ENCODE measurements at regions of chr1 and their contacts with region 1.

Region 1: GRCh38 chr1:63698001-63698838 is 75.6 kb upstream of the ROR1 start:
- DNase-seq: peak; percentile 75
- ATAC-seq: peak; percentile 89

Region 2: GRCh38 chr1:63198871-63199394 is 499.3 kb before region 1 on chr1:
- intact Hi-C with region 1: no loop called
- DNase-seq: no peak
- ATAC-seq: no peak

Region 3: GRCh38 chr1:63731117-63732043 is 33.2 kb after region 1 on chr1:
- intact Hi-C with region 1: no loop called
- DNase-seq: no peak
- ATAC-seq: peak; percentile 60

Region 4: DNA sequence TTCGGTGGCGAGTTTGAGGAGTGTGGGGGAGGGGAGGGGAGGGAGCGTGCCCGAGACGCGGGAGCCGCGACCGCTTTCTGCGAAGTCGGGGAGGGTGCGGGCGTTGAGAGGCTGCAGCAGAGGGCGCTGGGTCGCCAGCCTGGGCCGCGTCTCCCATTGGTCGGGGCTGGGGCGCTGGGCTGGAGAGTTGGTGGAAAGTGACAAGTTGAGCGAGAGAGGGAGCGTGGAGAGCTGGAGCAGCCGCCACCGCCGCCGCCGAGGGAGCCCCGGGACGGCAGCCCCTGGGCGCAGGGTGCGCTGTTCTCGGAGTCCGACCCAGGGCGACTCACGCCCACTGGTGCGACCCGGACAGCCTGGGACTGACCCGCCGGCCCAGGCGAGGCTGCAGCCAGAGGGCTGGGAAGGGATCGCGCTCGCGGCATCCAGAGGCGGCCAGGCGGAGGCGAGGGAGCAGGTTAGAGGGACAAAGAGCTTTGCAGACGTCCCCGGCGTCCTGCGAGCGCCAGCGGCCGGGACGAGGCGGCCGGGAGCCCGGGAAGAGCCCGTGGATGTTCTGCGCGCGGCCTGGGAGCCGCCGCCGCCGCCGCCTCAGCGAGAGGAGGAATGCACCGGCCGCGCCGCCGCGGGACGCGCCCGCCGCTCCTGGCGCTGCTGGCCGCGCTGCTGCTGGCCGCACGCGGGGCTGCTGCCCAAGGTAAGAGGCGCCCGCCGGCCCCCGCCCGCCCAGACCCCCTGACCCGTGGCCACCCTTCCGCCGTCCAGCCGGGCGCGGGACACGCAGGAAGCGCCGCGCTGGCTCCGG is 75.8 kb after region 1 on chr1 and contains the start of gene ROR1:
- intact Hi-C with region 1: loop called (anchors 2 kb)
- DNase-seq: peak; percentile 91
- ATAC-seq: peak; percentile 97
- total RNA-seq, gene ROR1: 8.4 TPM

Region 5: DNA sequence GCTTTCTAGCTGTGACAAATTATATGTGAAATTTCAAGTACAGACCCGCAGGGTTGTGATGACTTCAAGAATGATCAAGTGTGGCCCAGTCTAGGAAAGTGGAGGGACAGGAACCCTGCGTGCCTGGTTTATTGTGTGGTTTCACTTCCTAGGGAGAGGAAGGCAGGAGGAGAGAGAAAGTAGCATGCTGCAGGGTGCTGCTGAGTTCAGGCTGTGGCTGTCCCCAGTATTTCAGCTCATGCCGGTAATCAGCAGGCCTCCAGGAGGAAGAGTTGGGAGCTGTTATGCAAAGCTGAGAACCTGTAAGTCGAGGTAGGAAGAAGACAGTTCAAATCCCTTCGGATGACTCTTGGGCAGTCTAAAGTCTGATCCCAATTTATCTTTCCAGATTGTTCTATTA is 216.0 kb after region 1 on chr1:
- intact Hi-C with region 1: loop called (anchors 5 kb)
- DNase-seq: no peak
- ATAC-seq: no peak